Activated CD4-positive, alpha-beta memory T cell treated with anti-CD3 and anti-CD28 coated beads for 36 hours (primary cell): ENCODE measurements at regions of chr16 and their contacts with region 1.

Region 1: DNA sequence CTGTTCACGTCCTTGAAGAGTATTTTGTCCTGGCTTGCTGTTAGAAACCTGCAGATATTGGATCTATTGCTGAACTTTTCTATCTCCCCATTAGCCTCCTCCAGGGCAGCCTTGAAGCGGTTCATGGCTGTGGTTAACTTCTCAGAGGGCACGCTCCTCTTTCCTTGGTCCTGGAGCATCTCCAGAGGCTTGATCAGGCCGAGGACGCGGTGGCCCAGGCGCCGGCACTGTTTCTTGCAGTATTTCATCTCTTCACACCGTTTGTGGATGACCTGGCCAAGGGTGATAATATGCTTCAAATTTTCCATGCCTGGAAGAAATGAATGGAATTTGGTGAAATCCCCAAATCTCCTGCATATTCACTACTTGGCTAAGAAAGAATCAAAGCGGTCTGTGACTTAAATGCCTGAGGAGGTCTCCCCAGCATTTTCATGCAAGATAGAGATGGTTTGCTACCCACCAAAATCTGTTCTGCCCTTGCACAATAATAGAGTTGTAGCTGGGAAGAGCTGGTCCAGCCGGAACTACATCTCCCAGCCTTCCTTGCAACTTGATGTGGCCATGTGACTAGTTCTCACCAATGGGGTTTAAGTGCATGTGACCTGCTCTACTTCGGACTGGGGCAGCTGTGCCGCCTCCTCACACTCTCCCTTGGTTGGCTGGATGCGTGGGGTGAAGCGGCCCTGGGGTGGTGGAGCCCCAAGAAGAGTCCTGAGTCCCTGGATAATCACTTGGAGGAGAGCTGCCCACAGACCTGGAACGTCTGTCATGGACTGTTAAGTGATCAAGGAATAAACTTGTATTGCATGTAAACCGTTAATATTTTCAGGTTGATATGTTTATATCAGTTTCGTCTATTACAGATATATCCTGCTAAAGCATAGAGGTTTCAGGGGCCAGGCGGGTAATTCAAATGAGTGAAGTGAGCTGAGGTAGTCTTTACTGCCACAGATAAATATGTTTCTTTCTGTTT is 4.9 kb downstream of the MLKL start:
- DNase-seq: peak; percentile 75
- H3K4me3 Mint-ChIP-seq: peak overlapping the region; percentile 69
- H3K27ac Mint-ChIP-seq: no peak overlapping the region
- H3K4me1 Mint-ChIP-seq: peaks cover 40% of the 10 kb centered on the region
- H3K27me3 Mint-ChIP-seq: no peaks in the 10 kb centered on the region

Region 2: GRCh38 chr16:74623214-74623842 is 72.4 kb before region 1 on chr16:
- CTCF ChIA-PET with region 1: no interaction called
- POLR2A ChIA-PET with region 1: interaction called, 3 read pairs
- intact Hi-C with region 1: loop called (anchors 5 kb)
- DNase-seq: no peak
- H3K4me3 Mint-ChIP-seq: no peak overlapping the region
- H3K27ac Mint-ChIP-seq: no peak overlapping the region
- H3K4me1 Mint-ChIP-seq: peaks cover 38% of the 10 kb centered on the region
- H3K27me3 Mint-ChIP-seq: no peaks in the 10 kb centered on the region

Region 3: DNA sequence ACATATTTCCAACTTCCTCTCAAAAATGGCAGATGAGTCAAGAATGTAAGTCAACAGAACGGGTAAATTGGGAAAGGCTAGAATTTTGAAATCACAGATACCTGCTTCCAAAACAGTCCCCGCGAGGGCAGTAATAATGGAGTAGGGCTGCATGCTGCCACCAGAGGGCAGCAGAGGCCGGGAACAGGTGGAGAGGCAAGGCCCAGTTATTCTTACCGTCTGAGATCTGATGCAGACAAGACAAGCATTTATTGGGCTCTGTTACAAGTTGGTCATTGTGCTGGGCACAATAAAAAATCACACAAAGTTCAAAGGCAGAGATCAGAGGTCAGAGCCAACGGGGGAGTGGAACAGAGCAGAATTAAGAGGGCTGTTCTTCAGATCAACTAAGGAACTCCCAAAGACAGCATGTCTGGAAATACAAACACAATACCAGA is 13.7 kb after region 1 on chr16:
- CTCF ChIA-PET with region 1: interaction called, 23 read pairs
- POLR2A ChIA-PET with region 1: interaction called, 10 read pairs
- intact Hi-C with region 1: no loop called
- DNase-seq: peak; percentile 88
- H3K4me3 Mint-ChIP-seq: no peak overlapping the region
- H3K27ac Mint-ChIP-seq: peak overlapping the region; percentile 2
- H3K4me1 Mint-ChIP-seq: peaks cover 10% of the 10 kb centered on the region
- H3K27me3 Mint-ChIP-seq: no peaks in the 10 kb centered on the region

Region 4: GRCh38 chr16:74793571-74793970 is 97.8 kb after region 1 on chr16:
- CTCF ChIA-PET with region 1: no interaction called
- POLR2A ChIA-PET with region 1: no interaction called
- intact Hi-C with region 1: no loop called
- DNase-seq: no peak
- H3K4me3 Mint-ChIP-seq: no peak overlapping the region
- H3K27ac Mint-ChIP-seq: no peak overlapping the region
- H3K4me1 Mint-ChIP-seq: no peaks in the 10 kb centered on the region
- H3K27me3 Mint-ChIP-seq: peaks cover 26% of the 10 kb centered on the region

Region 5: GRCh38 chr16:74862741-74863244 is 167.1 kb after region 1 on chr16:
- CTCF ChIA-PET with region 1: interaction called, 10 read pairs
- POLR2A ChIA-PET with region 1: no interaction called
- intact Hi-C with region 1: no loop called
- DNase-seq: peak; percentile 29
- H3K4me3 Mint-ChIP-seq: no peak overlapping the region
- H3K27ac Mint-ChIP-seq: no peak overlapping the region
- H3K4me1 Mint-ChIP-seq: peaks cover 4% of the 10 kb centered on the region
- H3K27me3 Mint-ChIP-seq: no peaks in the 10 kb centered on the region